Activated T-helper 1 cell treated with anti-CD3 and anti-CD28 coated beads, Interleukin-12 subunit alpha, Interleukin-12 subunit beta, Interleukin-2, Interleukin-4 antibody, amounts not matched to agents 30 ng/mL and 10 ng/mL and 1 ng/mL, durations not matched to agents 14 hours and 24 hours and 36 hours (primary cell): ENCODE measurements at regions of chr22 and their contacts with region 1.

Region 1: DNA sequence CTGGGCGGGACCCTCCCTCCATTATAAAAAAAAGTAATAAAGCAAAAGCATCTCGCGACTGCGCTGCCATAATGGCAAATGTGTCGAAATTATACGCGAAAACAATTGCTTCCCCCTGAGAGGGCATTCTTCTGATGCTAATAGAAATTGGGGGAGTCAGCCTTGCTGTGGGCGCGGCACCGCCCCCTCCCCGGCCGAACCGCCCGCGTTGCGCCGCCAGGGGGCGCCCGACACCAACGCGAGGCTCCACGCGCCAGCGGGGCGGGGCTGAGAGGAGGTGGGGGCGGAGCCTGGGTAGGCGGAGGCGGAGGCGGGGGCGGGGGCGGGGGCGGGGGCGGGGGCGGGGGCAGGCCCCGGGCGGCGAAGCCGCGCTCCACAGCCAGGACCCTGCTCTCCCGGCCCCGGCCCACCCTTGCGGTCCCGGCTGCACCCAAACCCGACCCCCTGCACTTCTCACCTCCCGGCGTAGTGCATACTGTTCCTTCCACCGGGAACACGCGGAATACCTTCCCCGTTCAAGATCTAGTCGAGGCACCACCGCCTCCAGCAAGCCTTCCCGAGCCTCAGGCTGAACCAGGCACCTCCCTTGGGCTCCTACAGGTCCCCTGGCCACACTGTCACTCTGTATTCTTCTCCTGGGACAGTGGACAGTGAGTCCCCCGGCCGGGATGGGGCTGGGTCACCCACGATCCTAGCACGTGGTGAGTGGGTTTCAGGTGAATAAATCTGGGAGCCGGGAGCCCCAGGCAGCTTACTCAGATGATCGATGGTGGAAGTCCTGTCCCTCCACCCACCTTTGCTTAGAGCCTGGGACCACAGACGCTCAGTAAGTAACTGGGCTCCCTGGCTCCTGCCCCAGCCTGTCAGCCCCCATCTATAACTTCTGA is 15.5 kb upstream of the UPK3A start:
- DNase-seq: peak; percentile 85
- H3K4me3 Mint-ChIP-seq: peak overlapping the region; percentile 77
- H3K27ac Mint-ChIP-seq: peak overlapping the region; percentile 91
- H3K4me1 Mint-ChIP-seq: peaks cover 12% of the 10 kb centered on the region
- H3K27me3 Mint-ChIP-seq: peaks cover 35% of the 10 kb centered on the region

Region 2: GRCh38 chr22:45240810-45241631 is 28.2 kb before region 1 on chr22 and contains the start of gene KIAA0930:
- intact Hi-C with region 1: loop called (anchors 2 kb)
- DNase-seq: peak; percentile 68
- H3K4me3 Mint-ChIP-seq: peak within 1 kb of the TSS; percentile 93
- H3K27ac Mint-ChIP-seq: peak within 1 kb of the TSS; percentile 89
- H3K4me1 Mint-ChIP-seq: peaks cover 8% of the 10 kb centered on the region
- H3K27me3 Mint-ChIP-seq: no peaks in the 10 kb centered on the region
- total RNA-seq, gene KIAA0930: 45.5 and 48.7 TPM in 2 replicates

Region 3: GRCh38 chr22:45318168-45318557 is 49.0 kb after region 1 on chr22:
- intact Hi-C with region 1: loop called (anchors 2 kb)
- DNase-seq: peak; percentile 83
- H3K4me3 Mint-ChIP-seq: peak overlapping the region; percentile 79
- H3K27ac Mint-ChIP-seq: peak overlapping the region; percentile 97
- H3K4me1 Mint-ChIP-seq: peaks cover 69% of the 10 kb centered on the region
- H3K27me3 Mint-ChIP-seq: no peaks in the 10 kb centered on the region

Region 4: GRCh38 chr22:45413368-45414211 is 144.4 kb after region 1 on chr22 and contains the starts of genes RIBC2 and SMC1B:
- intact Hi-C with region 1: loop called (anchors 2 kb)
- DNase-seq: peak; percentile 85
- H3K4me3 Mint-ChIP-seq: peak within 1 kb of the TSS; percentile 88
- H3K27ac Mint-ChIP-seq: peak within 1 kb of the TSS; percentile 94
- H3K4me1 Mint-ChIP-seq: peaks cover 13% of the 10 kb centered on the region
- H3K27me3 Mint-ChIP-seq: no peaks in the 10 kb centered on the region
- total RNA-seq, gene RIBC2: 10.6 and 12.6 TPM in 2 replicates
- total RNA-seq, gene SMC1B: 0.44 and 0.83 TPM in 2 replicates

Region 5: DNA sequence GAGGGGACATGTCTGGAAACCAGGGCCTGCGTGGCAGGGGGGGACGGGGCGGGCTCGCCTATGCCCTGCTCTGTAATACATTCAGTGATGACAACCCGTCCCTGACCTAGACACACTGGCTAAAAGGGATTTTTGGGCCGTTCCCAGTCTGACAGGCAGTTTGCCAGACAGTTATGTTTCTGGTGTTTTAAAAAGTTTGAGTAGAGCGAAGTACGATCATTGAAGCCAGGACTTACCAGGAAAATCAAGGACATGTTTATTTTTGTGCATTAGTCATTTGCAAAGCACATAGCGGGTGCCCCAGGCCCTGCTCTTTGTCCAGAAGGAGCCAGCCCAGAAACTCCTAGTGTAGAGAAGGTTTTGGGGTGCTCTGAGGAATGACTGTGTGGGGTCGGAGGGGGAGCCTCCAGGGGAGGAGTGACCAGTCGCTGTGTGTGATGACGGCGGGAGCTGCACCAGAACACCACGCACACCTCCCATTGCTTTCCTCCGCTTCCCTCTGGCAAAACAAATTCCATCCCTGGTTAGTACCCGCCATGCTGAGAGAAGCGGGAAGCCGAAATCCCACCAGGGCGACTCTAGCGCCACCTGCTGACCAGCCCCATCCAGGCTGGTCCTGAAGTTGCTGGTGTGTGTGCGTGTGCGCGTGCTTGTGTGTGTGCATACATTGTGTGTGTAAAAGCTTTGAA is 284.3 kb after region 1 on chr22:
- intact Hi-C with region 1: loop called (anchors 2 kb)
- DNase-seq: peak; percentile 15
- H3K4me3 Mint-ChIP-seq: no peak overlapping the region
- H3K27ac Mint-ChIP-seq: no peak overlapping the region
- H3K4me1 Mint-ChIP-seq: no peaks in the 10 kb centered on the region
- H3K27me3 Mint-ChIP-seq: no peaks in the 10 kb centered on the region